ENCODE measurements at regions of chr1 and their contacts with region 1.

Region 1: DNA sequence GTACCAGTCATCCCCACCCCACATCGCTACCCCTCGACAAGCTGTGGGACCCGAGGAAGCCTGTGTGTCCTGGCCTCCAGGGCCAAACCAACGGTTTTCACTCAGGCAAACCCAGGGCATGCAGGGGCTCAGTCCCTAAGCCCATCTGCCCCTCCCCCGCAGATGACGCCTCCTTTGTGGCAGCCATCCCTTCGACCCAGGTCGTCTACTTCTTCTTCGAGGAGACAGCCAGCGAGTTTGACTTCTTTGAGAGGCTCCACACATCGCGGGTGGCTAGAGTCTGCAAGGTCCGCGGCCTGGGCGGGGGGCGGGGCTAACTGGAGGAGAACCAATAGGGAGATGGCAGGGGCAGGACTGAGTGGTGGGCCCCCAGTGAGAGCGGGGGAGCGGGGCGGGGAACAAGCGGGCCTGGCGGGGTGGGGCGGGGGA is 7.4 kb downstream of the SEMA4A start:
- DNase-seq: peak; percentile 80
- ATAC-seq: peak; percentile 80
- H3K4me3 Mint-ChIP-seq: peak overlapping the region; percentile 63
- H3K27ac Mint-ChIP-seq: peak overlapping the region; percentile 66
- H3K4me1 Mint-ChIP-seq: peaks cover 59% of the 10 kb centered on the region
- H3K27me3 Mint-ChIP-seq: no peaks in the 10 kb centered on the region
- CTCF ChIP-seq: no peak

Region 2: DNA sequence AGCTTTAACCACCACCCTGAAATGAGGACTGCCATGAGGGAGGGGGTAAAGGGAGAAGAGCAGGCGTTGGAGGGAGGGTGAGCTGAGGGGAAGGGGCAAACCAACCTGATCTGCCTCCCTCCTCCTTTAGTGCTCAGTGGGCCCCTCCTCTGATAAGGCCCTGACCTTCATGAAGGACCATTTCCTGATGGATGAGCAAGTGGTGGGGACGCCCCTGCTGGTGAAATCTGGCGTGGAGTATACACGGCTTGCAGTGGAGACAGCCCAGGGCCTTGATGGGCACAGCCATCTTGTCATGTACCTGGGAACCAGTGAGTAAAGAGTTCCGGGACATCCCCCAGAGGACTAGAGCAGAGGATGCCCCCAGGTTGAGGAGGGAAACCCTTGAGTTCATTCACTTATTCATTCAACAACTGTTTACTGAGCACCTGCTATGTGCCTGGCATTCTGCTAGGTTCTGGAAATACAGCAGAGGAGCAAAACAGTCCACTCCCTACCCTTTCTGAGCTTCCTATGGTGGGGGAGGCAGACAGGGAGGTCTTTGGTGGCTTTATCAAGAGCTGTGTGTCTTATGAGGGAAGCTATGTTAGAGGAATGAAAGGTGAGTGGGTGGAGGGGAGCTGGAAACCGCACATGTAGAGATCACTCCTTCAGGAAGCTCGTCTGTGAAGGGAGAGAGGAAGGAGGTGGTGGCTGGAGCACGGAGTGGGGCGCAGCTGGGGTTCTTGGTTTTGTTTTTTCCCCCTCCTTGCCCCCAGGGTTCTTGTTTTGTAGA is 12.1 kb after region 1 on chr1:
- CTCF ChIA-PET with region 1: interaction called, 11 read pairs
- POLR2A ChIA-PET with region 1: interaction called, 6 read pairs
- intact Hi-C with region 1: no loop called
- DNase-seq: no peak
- ATAC-seq: peak; percentile 20
- H3K4me3 Mint-ChIP-seq: no peak overlapping the region
- H3K27ac Mint-ChIP-seq: no peak overlapping the region
- H3K4me1 Mint-ChIP-seq: peaks cover 21% of the 10 kb centered on the region
- H3K27me3 Mint-ChIP-seq: no peaks in the 10 kb centered on the region
- CTCF ChIP-seq: no peak

Measured in activated CD8-positive, alpha-beta T cell treated with anti-CD3 and anti-CD28 coated beads for 36 hours (primary cell).